ENCODE measurements at regions of chr6 and their contacts with region 1.

Region 1: GRCh38 chr6:130482645-130483390 is 117.0 kb downstream of the TMEM200A start:
- DNase-seq: peak; percentile 82
- ATAC-seq: peak; percentile 67
- H3K4me3 ChIP-seq: no peak overlapping the region
- H3K27ac ChIP-seq: peak overlapping the region; percentile 41; the same call in 1 of the 2 replicates
- H3K4me1 ChIP-seq: peaks cover 2% of the 10 kb centered on the region; the same call in 1 of the 2 replicates
- H3K27me3 ChIP-seq: no peaks in the 10 kb centered on the region
- CTCF ChIP-seq: no peak
- POLR2A ChIP-seq: no peak
- RAD21 ChIP-seq: no peak

Region 2: GRCh38 chr6:130503146-130503545 is 20.3 kb after region 1 on chr6:
- CTCF ChIA-PET with region 1: no interaction called
- POLR2A ChIA-PET with region 1: no interaction called
- dilution Hi-C with region 1: no loop called
- in situ Hi-C with region 1: no loop called
- intact Hi-C with region 1: loop called (anchors 2 kb)
- DNase-seq: peak; percentile 71
- ATAC-seq: no peak
- H3K4me3 ChIP-seq: no peak overlapping the region
- H3K27ac ChIP-seq: no peak overlapping the region
- H3K4me1 ChIP-seq: no peaks in the 10 kb centered on the region
- H3K27me3 ChIP-seq: no peaks in the 10 kb centered on the region
- CTCF ChIP-seq: no peak
- POLR2A ChIP-seq: no peak
- RAD21 ChIP-seq: no peak

Region 3: GRCh38 chr6:130529569-130530149 is 46.8 kb after region 1 on chr6:
- CTCF ChIA-PET with region 1: no interaction called
- POLR2A ChIA-PET with region 1: no interaction called
- dilution Hi-C with region 1: no loop called
- in situ Hi-C with region 1: no loop called
- intact Hi-C with region 1: no loop called
- DNase-seq: no peak
- ATAC-seq: no peak
- H3K4me3 ChIP-seq: no peak overlapping the region
- H3K27ac ChIP-seq: no peak overlapping the region
- H3K4me1 ChIP-seq: no peaks in the 10 kb centered on the region
- H3K27me3 ChIP-seq: no peaks in the 10 kb centered on the region
- CTCF ChIP-seq: no peak
- POLR2A ChIP-seq: no peak
- RAD21 ChIP-seq: no peak

Region 4: DNA sequence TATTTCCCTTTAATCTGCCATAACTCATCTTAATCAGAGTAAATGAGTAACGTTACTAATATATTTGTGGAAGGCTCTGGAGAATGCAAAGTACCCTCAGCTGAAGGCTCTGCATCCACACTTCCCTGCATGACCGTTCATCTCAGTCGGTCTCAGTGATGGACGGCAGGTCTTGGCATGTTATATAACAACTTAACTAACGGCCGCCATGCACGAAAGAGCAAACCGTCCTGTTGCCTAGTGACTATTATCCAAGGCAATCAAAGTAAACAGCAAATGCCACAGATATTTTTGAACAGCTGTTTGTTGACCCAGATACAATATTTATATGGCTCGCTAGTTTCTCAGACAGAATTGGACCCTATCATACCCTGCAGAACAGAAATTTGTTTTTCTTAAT is 149.5 kb after region 1 on chr6:
- CTCF ChIA-PET with region 1: no interaction called
- POLR2A ChIA-PET with region 1: no interaction called
- dilution Hi-C with region 1: no loop called
- in situ Hi-C with region 1: no loop called
- intact Hi-C with region 1: no loop called
- DNase-seq: no peak
- ATAC-seq: no peak
- H3K4me3 ChIP-seq: no peak overlapping the region
- H3K27ac ChIP-seq: no peak overlapping the region
- H3K4me1 ChIP-seq: no peaks in the 10 kb centered on the region
- H3K27me3 ChIP-seq: no peaks in the 10 kb centered on the region
- CTCF ChIP-seq: no peak
- POLR2A ChIP-seq: no peak
- RAD21 ChIP-seq: no peak

Region 5: DNA sequence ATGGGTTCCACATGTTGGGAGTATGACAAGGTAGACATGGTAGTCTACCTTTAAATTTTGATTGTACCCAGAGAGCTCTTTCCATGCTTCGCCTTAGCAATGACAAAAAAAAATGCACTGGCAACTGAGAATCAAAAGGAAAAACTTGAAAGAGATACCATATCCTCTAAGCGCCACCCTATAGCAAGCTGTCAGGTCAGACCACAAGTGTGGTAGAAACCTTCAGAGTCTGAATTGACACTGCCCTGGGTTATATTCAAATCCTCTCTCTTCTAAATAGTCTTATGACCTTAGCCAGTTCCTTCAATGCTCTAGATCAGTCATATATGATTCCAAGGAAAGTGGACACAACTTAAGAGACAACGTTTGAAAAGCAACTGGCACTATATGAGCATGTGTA is 298.7 kb after region 1 on chr6:
- CTCF ChIA-PET with region 1: no interaction called
- POLR2A ChIA-PET with region 1: no interaction called
- dilution Hi-C with region 1: no loop called
- in situ Hi-C with region 1: no loop called
- intact Hi-C with region 1: no loop called
- DNase-seq: no peak
- ATAC-seq: no peak
- H3K4me3 ChIP-seq: no peak overlapping the region
- H3K27ac ChIP-seq: no peak overlapping the region
- H3K4me1 ChIP-seq: peaks cover 2% of the 10 kb centered on the region; the same call in 1 of the 2 replicates
- H3K27me3 ChIP-seq: no peaks in the 10 kb centered on the region; the same call in 1 of the 2 replicates
- CTCF ChIP-seq: no peak
- POLR2A ChIP-seq: no peak
- RAD21 ChIP-seq: no peak

Measured in IMR-90 (cell line).